GM18951 (cell line): ENCODE measurements at regions of chr19 and their contacts with region 1.

Region 1: GRCh38 chr19:6521718-6522646 is 8.8 kb upstream of the TNFSF9 start:
- POLR2A ChIP-seq: peak; percentile 57

Region 2: DNA sequence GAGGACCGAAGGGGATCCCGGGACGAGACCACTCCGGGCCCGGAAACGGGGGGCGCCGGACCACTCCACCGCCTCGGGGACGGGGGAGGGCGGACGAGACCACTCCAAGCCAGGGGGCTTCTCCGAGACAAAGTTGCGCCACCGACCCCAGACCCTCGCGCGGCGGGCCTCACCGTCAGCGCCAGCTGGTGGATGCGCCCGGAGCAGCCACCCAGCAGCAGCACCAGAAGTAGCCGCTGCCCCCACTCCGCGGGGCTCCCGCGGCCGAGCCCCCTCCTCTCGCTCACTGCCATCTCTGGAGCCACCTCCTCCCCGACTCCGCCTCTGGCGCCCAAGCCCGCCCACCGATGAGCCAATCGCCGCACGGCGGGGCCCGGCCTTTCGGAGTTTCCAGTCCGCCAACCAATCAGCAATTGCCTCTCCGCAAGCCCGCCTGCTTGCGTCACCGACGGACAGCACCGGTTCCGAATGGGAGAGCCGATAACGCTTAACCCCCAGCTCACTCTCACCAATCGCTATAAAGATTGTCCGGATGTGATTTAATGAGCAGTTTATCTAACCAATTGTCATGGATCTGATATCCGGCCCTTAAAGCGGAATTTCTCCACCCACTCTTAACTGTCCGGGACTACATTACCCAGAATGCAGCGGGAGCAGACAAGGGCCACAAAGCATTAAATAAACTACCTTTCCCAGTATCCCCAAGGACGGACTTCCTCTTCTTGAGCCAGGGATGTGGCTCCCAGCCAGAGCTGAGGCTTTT is 215.5 kb after region 1 on chr19 and contains the start of gene GPR108:
- in situ Hi-C with region 1: loop called (anchors 10 kb)
- POLR2A ChIP-seq: peak; percentile 60